PC-9 (cell line): ENCODE measurements at regions of chr17 and their contacts with region 1.

Region 1: GRCh38 chr17:47957591-47958428 is at the start of gene PRR15L:
- DNase-seq: peak; percentile 76 to 93
- H3K4me3 ChIP-seq: peak within 1 kb of the TSS; percentile 48
- H3K27ac ChIP-seq: peak within 1 kb of the TSS; percentile 88
- H3K4me1 ChIP-seq: peaks cover 62% of the 10 kb centered on the region
- H3K27me3 ChIP-seq: no peaks in the 10 kb centered on the region
- CTCF ChIP-seq: no peak
- total RNA-seq, gene PRR15L: 5.3 and 6.2 TPM in 2 replicates

Region 2: DNA sequence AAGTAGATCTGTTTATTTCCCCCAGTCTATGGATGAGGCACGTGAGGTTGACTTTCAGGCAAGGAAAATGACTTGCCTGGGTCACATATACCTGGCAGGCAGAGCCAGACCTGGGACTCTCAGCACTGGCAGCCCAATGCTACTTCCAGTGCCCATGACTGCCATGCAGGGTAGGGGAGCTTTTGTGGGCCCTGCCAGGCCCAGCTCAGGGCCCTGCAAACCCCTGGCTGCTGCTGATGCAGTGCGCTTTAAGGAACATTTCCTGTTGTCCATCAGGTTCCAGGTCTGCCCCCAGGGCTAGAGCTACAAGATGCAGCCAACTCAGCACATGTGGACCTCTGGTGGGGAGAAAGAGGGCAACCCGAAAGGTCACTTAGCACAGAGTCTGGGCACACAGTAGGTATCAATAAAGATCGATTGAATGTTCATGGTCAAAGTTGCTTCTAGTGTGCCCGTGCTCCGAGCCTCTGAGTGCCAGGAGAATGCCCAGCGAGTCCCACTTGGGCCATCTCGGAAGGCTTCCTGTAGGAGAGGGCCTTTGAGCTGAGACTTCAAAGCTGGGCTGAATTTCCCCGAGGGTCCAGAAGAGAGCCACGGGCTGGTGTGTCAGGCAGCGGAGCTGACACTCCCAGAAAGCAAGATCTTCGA is 225.3 kb before region 1 on chr17:
- CTCF ChIA-PET with region 1: no interaction called
- POLR2A ChIA-PET with region 1: interaction called, 24 read pairs
- intact Hi-C with region 1: no loop called
- DNase-seq: no peak
- H3K4me3 ChIP-seq: no peak overlapping the region; the same call in 1 of the 2 replicates
- H3K27ac ChIP-seq: no peak overlapping the region
- H3K4me1 ChIP-seq: no peaks in the 10 kb centered on the region
- H3K27me3 ChIP-seq: peaks cover 72% of the 10 kb centered on the region
- CTCF ChIP-seq: no peak

Region 3: GRCh38 chr17:47850692-47851573 is 106.9 kb before region 1 on chr17 and contains the start of gene SP6:
- CTCF ChIA-PET with region 1: no interaction called
- POLR2A ChIA-PET with region 1: no interaction called
- intact Hi-C with region 1: no loop called
- DNase-seq: peak; percentile 86 to 88
- H3K4me3 ChIP-seq: peak within 1 kb of the TSS; percentile 72
- H3K27ac ChIP-seq: peak within 1 kb of the TSS; percentile 55
- H3K4me1 ChIP-seq: peaks cover 33% of the 10 kb centered on the region
- H3K27me3 ChIP-seq: no peaks in the 10 kb centered on the region
- CTCF ChIP-seq: no peak; the same call in 1 of the 2 replicates
- total RNA-seq, gene SP6: 13.3 and 14.9 TPM in 2 replicates

Region 4: GRCh38 chr17:47882247-47882646 is 75.6 kb before region 1 on chr17:
- CTCF ChIA-PET with region 1: no interaction called
- POLR2A ChIA-PET with region 1: no interaction called
- intact Hi-C with region 1: no loop called
- DNase-seq: peak; percentile 50 to 70
- H3K4me3 ChIP-seq: no peak overlapping the region
- H3K27ac ChIP-seq: peak overlapping the region; percentile 91
- H3K4me1 ChIP-seq: peaks cover 94% of the 10 kb centered on the region
- H3K27me3 ChIP-seq: no peaks in the 10 kb centered on the region
- CTCF ChIP-seq: no peak

Region 5: GRCh38 chr17:47895856-47896671 is 61.7 kb before region 1 on chr17 and contains the start of gene SP2:
- CTCF ChIA-PET with region 1: no interaction called
- POLR2A ChIA-PET with region 1: interaction called, 25 read pairs
- intact Hi-C with region 1: no loop called
- DNase-seq: peak; percentile 99 to 100
- H3K4me3 ChIP-seq: peak within 1 kb of the TSS; percentile 93
- H3K27ac ChIP-seq: peak within 1 kb of the TSS; percentile 74
- H3K4me1 ChIP-seq: peaks cover 32% of the 10 kb centered on the region
- H3K27me3 ChIP-seq: no peaks in the 10 kb centered on the region
- CTCF ChIP-seq: peak; percentile 27; the same call in 1 of the 2 replicates
- total RNA-seq, gene SP2: 13.5 and 18.0 TPM in 2 replicates

Region 6: GRCh38 chr17:47970704-47971463 is 13.1 kb after region 1 on chr17 and contains the start of gene CDK5RAP3:
- CTCF ChIA-PET with region 1: interaction called, 8 read pairs
- POLR2A ChIA-PET with region 1: interaction called, 3 read pairs
- intact Hi-C with region 1: loop called (anchors 1 kb)
- DNase-seq: peak; percentile 97 to 99
- H3K4me3 ChIP-seq: peak within 1 kb of the TSS; percentile 78
- H3K27ac ChIP-seq: peak within 1 kb of the TSS; percentile 60
- H3K4me1 ChIP-seq: peaks cover 52% of the 10 kb centered on the region
- H3K27me3 ChIP-seq: no peaks in the 10 kb centered on the region
- CTCF ChIP-seq: peak; percentile 90
- total RNA-seq, gene CDK5RAP3: 147 and 195 TPM in 2 replicates

Region 7: DNA sequence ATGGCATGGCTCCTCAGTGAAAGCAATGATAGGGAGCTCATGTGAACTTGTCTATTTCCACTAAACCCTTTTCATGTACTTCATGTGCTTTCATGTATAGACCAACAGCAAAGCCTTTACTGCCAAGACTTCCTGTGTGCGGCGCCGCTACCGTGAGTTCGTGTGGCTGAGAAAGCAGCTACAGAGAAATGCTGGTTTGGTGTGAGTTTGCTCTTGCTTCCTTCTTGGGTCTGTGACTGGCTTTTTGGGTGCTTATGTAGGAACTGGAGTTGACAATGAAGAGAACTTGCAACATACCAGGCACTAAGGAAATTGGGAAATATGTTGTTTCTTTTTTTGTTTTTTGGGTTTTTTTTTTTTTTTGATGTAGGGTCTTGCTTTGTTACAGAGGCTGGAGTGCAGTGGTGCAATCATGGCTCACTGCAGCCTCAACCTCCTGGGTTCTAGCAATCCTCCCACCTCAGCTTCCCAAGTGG is 155.4 kb after region 1 on chr17:
- CTCF ChIA-PET with region 1: no interaction called
- POLR2A ChIA-PET with region 1: no interaction called
- intact Hi-C with region 1: no loop called
- DNase-seq: no peak
- H3K4me3 ChIP-seq: no peak overlapping the region
- H3K27ac ChIP-seq: no peak overlapping the region
- H3K4me1 ChIP-seq: peaks cover 8% of the 10 kb centered on the region
- H3K27me3 ChIP-seq: no peaks in the 10 kb centered on the region
- CTCF ChIP-seq: no peak

Region 8: GRCh38 chr17:49646391-49647255 is 1688.8 kb after region 1 on chr17:
- CTCF ChIA-PET with region 1: no interaction called
- POLR2A ChIA-PET with region 1: interaction called, 11 read pairs
- intact Hi-C with region 1: no loop called
- DNase-seq: peak; percentile 67 to 81
- H3K4me3 ChIP-seq: no peak overlapping the region
- H3K27ac ChIP-seq: peak overlapping the region; percentile 50
- H3K4me1 ChIP-seq: peaks cover 17% of the 10 kb centered on the region
- H3K27me3 ChIP-seq: no peaks in the 10 kb centered on the region
- CTCF ChIP-seq: no peak